ENCODE measurements at regions of chr1 and their contacts with region 1.

Region 1: GRCh38 chr1:54715493-54716298 is at the start of gene TTC4:
- DNase-seq: peak; percentile 87 to 90
- ATAC-seq: peak; percentile 98 to 99 (median 99)
- H3K4me3 ChIP-seq: peak within 1 kb of the TSS; percentile 94
- H3K27ac ChIP-seq: peak within 1 kb of the TSS; percentile 90
- H3K4me1 ChIP-seq: peaks cover 8% of the 10 kb centered on the region
- H3K27me3 ChIP-seq: no peaks in the 10 kb centered on the region
- CTCF ChIP-seq: no peak
- total RNA-seq, gene TTC4: 27.2 to 41.4 (median 35.0) TPM

Region 2: DNA sequence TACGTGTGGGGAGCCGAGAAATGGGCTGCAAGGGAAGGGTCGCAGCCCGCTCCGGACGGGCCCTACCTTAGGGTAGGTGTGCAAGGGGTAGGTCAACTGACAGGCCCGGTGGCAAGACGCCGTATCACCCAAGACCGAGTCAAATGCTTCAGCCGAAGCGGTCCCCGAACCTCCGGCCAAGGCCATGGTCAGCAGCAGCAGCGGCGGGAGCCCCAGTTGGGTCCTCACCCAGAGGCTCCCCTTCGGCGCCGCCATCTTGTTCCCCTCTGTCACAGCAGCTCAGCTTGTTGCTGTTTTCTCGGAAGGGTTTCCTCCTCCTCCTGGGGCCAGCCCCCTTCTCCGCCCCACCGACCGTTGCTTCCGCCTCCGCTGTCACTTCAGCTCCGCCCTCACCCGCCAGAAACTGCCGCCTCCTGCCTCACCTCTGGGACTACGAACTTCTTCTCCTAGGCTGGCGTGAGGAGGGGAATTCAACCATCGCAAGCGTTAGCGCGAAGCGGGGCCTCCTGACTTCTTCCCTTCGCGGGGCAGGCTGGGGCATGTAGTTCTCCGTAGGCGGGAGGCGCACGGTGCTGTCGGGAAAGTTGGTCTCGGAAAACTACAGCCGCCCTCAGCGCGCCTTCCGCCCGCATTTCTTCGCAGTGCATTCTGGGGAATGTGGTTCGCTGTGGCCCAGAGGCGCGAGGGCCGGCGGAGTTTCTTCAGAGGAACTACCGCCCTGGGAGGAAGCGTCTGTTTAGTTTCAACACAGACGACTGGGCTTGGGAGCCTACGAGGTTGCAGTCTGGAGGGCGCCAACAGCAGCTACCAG is 662.6 kb before region 1 on chr1 and contains the starts of genes TCEANC2 and TMEM59:
- intact Hi-C with region 1: loop called (anchors 10 kb)
- DNase-seq: peak; percentile 98 to 99
- ATAC-seq: peak; percentile 94 to 96 (median 95)
- H3K4me3 ChIP-seq: peak within 1 kb of the TSS; percentile 74
- H3K27ac ChIP-seq: peak within 1 kb of the TSS; percentile 91
- H3K4me1 ChIP-seq: peaks cover 41% of the 10 kb centered on the region
- H3K27me3 ChIP-seq: no peaks in the 10 kb centered on the region
- CTCF ChIP-seq: no peak
- total RNA-seq, gene TCEANC2: 5.5 to 10.4 (median 6.6) TPM
- total RNA-seq, gene TMEM59: 166 to 216 (median 182) TPM

Region 3: DNA sequence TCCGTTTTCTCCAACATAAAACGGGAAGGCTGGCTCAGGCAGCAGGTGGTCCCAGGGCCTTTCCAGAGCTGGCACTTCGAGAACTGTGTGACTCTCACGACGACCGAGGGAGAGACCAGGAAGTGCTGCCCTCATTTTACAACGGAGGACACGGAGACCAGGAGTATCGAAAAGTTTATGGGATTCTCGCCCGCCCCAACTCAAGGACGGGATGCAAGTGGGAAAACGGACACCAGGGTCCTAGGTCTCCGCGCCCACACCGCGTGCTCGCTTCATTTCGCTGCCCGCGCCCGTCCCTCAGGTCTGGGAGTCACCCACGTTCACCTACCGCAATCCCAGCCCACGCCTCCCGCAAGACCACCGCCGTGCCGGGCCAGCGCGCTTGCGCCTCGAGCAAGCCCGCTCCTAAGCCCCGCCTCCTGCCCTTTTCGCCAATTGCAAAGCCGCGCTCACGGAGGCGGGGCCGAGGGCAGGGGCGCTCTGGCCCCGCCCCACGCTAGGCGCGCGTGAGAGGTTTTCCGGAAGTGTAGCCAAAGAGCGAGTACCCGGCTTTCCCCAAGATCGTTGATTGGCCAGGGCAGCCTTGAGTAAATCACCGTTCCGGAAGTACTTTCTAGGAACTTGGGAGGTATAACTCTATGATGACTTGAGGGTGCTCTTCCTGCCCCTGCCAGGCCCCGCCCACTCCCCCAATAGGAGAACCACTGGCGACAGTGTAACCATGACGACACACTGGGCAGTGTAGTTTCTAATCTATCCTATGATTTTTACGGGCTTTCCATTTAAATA is 48.6 kb after region 1 on chr1 and contains the start of gene PARS2:
- intact Hi-C with region 1: loop called (anchors 5 kb)
- DNase-seq: peak; percentile 96 to 98
- ATAC-seq: peak; percentile 98 to 100 (median 98)
- H3K4me3 ChIP-seq: peak within 1 kb of the TSS; percentile 91
- H3K27ac ChIP-seq: peak within 1 kb of the TSS; percentile 82
- H3K4me1 ChIP-seq: peaks cover 6% of the 10 kb centered on the region
- H3K27me3 ChIP-seq: no peaks in the 10 kb centered on the region
- CTCF ChIP-seq: no peak
- total RNA-seq, gene PARS2: 2.4 to 3.7 (median 3.4) TPM

Measured in psoas muscle (tissue), 8 donors.